ENCODE measurements at regions of chr12 and their contacts with region 1.

Region 1: GRCh38 chr12:56127888-56128669 is at the start of gene ESYT1:
- DNase-seq: peak; percentile 92 to 99 (median 99)
- ATAC-seq: peak; percentile 86 to 92 (median 89)
- H3K4me3 ChIP-seq: peak within 1 kb of the TSS; percentile 64 to 82 (median 76)
- H3K27ac ChIP-seq: peak within 1 kb of the TSS; percentile 67 to 91 (median 80)
- H3K4me1 ChIP-seq: peaks cover 10 to 27% (median 12%) of the 10 kb centered on the region in 3 donors
- H3K27me3 ChIP-seq: no peaks in the 10 kb centered on the region
- CTCF ChIP-seq: no peak
- total RNA-seq, gene ESYT1: 42.8 to 55.1 (median 46.5) TPM

Region 2: GRCh38 chr12:56230432-56231183 is 102.5 kb after region 1 on chr12:
- intact Hi-C with region 1: no loop called
- DNase-seq: peak; percentile 84 to 95 (median 94)
- ATAC-seq: peak; percentile 86 to 93 (median 91)
- H3K4me3 ChIP-seq: peak overlapping the region; percentile 16 to 56 (median 44)
- H3K27ac ChIP-seq: peak overlapping the region; percentile 66 to 71 (median 70)
- H3K4me1 ChIP-seq: peaks cover 0 to 18% (median 8%) of the 10 kb centered on the region in 3 donors
- H3K27me3 ChIP-seq: no peaks in the 10 kb centered on the region
- CTCF ChIP-seq: no peak

Region 3: GRCh38 chr12:56450241-56450640 is 322.2 kb after region 1 on chr12:
- intact Hi-C with region 1: loop called in 1 of 3 experiments (anchors 10 kb)
- DNase-seq: no peak
- ATAC-seq: no peak
- H3K4me3 ChIP-seq: no peak overlapping the region
- H3K27ac ChIP-seq: no peak overlapping the region
- H3K4me1 ChIP-seq: peaks cover 0 to 5% (median 0%) of the 10 kb centered on the region in 3 donors
- H3K27me3 ChIP-seq: no peaks in the 10 kb centered on the region
- CTCF ChIP-seq: no peak

Measured in pancreas (tissue), 10 donors.